ENCODE measurements at regions of chr3 and their contacts with region 1.

Region 1: GRCh38 chr3:50427984-50428633 is 68.8 kb upstream of the TMEM115 start:
- DNase-seq: peak; percentile 88
- H3K4me3 ChIP-seq: no peak overlapping the region; a peak in 1 of 4 replicates
- H3K27ac ChIP-seq: peak overlapping the region in 1 of 2 experiments; percentile 100; a peak in 2 of 4 replicates
- H3K4me1 ChIP-seq: peaks cover 0 to 92% of the 10 kb centered on the region in 2 experiments; a peak in 2 of 4 replicates
- H3K27me3 ChIP-seq: no peaks in the 10 kb centered on the region
- CTCF ChIP-seq: peak; percentile 36; the same call in 1 of the 2 replicates
- EP300 ChIP-seq: peak in 1 of 2 experiments; percentile 97; a peak in 2 of 4 replicates
- RAD21 ChIP-seq: peak; percentile 81

Region 2: DNA sequence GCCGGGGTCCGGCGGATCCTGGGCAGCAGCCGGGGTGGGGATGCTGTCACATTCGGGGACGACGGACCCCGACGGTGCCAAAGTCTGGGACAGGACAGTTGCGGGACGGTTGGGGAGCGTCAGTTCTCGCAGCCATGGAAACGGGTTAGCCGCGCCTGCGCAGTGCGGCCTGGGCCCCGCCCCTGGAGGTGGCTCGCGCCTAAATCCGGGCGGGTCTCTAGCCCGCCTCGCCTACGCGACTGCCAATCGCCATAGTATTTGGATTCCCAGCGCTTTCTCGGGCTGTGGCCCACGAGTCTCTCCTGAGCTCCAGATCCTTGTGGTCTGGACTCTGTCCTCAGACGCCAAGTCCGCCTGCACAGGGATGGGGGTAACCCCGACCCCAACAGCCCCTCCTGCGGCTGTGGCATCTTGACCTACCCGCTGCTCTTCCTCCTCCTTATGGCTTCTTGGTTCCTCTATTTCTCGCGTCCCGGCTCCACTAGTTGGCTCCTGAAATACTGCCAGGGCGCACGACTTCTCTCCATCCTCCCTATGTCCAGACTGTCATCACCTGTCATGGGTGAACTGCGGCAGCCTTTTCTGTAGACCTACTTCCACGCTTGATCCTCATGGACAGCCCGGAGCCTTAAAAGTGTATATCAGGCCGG is 82.4 kb before region 1 on chr3 and contains the start of gene ZMYND10:
- CTCF ChIA-PET with region 1: interaction called, 45 read pairs
- POLR2A ChIA-PET with region 1: interaction called, 13 read pairs
- DNase-seq: no peak
- H3K4me3 ChIP-seq: no peak within 1 kb of the TSS
- H3K27ac ChIP-seq: no peak within 1 kb of the TSS
- H3K4me1 ChIP-seq: peaks cover 3 to 32% of the 10 kb centered on the region in 2 experiments; a peak in 1 of 4 replicates
- H3K27me3 ChIP-seq: no peaks in the 10 kb centered on the region
- CTCF ChIP-seq: no peak
- EP300 ChIP-seq: no peak
- RAD21 ChIP-seq: no peak
- polyA plus RNA-seq, gene ZMYND10: 0.83 and 0.95 TPM in 2 replicates

Region 3: GRCh38 chr3:50370594-50370993 is 57.5 kb before region 1 on chr3:
- CTCF ChIA-PET with region 1: interaction called, 48 read pairs
- POLR2A ChIA-PET with region 1: no interaction called
- DNase-seq: peak; percentile 78
- H3K4me3 ChIP-seq: no peak overlapping the region
- H3K27ac ChIP-seq: peak overlapping the region in 1 of 2 experiments; percentile 56; a peak in 2 of 4 replicates
- H3K4me1 ChIP-seq: peaks cover 0 to 78% of the 10 kb centered on the region in 2 experiments; a peak in 2 of 4 replicates
- H3K27me3 ChIP-seq: no peaks in the 10 kb centered on the region
- CTCF ChIP-seq: peak; percentile 31
- EP300 ChIP-seq: no peak
- RAD21 ChIP-seq: peak; percentile 72

Region 4: DNA sequence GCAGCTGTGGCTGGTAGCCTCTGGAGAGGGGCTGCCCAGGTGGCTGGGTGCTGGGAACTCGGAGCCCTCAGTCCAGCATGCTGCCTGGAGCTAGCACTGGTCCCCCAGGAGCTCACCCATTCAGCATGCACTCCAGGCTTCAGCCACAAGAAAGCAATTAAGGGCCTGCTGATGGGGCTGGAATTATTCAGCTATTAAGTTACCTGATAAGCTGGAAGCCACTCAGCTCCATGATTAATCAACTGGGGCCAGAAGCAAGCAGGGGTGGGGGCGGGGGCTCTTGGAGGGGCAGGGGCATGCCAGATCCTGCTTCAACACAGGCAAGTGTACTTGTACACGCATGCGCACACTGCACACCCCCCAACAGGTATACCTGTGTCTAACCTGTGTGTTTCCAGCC is 46.7 kb before region 1 on chr3:
- CTCF ChIA-PET with region 1: interaction called, 128 read pairs
- POLR2A ChIA-PET with region 1: interaction called, 19 read pairs
- DNase-seq: peak; percentile 90
- H3K4me3 ChIP-seq: peak overlapping the region in 1 of 2 experiments; percentile 41; a peak in 1 of 4 replicates
- H3K27ac ChIP-seq: peak overlapping the region in 1 of 2 experiments; percentile 100; a peak in 2 of 4 replicates
- H3K4me1 ChIP-seq: peaks cover 0 to 98% of the 10 kb centered on the region in 2 experiments; a peak in 2 of 4 replicates
- H3K27me3 ChIP-seq: no peaks in the 10 kb centered on the region
- CTCF ChIP-seq: no peak
- EP300 ChIP-seq: peak in 1 of 2 experiments; percentile 97; a peak in 2 of 4 replicates
- RAD21 ChIP-seq: no peak; the same call in 1 of the 2 replicates

Region 5: DNA sequence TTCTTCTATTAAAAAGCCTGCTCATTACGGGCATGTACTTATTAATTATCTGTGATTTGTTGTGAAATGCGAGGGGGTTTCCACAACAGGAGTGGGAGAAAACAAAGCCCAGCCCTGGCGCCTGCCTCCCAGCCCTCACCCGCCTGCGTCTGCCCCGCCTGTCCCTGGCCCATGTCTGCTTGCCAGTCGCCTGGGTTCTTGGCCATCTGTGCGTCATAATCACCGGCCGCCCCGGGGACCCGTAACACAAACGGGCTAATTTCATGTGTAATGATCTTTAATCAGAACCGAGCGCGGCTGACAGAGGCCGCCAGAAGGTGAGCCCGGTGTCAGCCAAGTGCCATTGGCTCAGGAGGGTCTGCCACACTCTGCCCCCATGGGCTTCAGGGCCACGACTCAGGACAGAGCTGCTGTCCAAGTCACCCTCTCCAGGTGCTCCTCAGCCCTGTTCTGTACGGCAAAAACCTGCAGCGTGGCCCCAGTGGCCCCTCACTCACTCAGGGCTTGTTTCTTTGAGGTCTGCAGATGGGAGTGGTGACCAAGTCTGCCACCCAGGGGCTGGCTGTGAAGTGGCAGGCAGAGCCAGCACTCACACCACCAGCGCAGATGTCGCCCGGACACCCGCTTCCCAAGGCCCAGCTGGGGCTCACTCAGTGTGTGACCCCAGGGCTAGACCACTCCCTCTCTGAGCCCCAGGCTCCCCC is 39.9 kb before region 1 on chr3:
- CTCF ChIA-PET with region 1: interaction called, 128 read pairs
- POLR2A ChIA-PET with region 1: interaction called, 14 read pairs
- DNase-seq: peak; percentile 89
- H3K4me3 ChIP-seq: no peak overlapping the region
- H3K27ac ChIP-seq: peak overlapping the region in 1 of 2 experiments; percentile 100; a peak in 2 of 4 replicates
- H3K4me1 ChIP-seq: peaks cover 0 to 99% of the 10 kb centered on the region in 2 experiments; a peak in 2 of 4 replicates
- H3K27me3 ChIP-seq: no peaks in the 10 kb centered on the region
- CTCF ChIP-seq: peak; percentile 46
- EP300 ChIP-seq: peak in 1 of 2 experiments; percentile 86; a peak in 1 of 4 replicates
- RAD21 ChIP-seq: peak; percentile 73

Region 6: DNA sequence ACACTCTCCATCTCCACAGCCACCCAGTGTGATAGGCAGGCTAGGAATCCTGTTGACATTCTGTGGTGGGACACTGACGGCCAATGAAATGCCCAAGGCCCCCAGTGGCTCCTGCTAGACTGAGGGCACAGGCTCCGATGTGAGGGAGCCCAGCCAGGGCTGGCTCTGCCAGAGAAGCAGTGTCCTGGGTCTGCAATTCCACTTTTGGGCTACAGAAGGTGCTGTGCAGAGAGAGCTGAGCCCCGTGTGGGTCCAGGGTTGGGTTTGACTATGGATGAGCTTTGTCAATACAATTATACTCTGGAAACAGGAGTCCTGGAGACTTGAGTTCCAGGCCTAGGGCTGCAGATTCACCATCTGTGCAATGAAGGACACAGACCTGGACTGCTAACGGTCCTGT is 13.0 kb before region 1 on chr3:
- CTCF ChIA-PET with region 1: interaction called, 43 read pairs
- POLR2A ChIA-PET with region 1: interaction called, 3 read pairs
- DNase-seq: no peak
- H3K4me3 ChIP-seq: no peak overlapping the region
- H3K27ac ChIP-seq: peak overlapping the region in 1 of 2 experiments; percentile 45; a peak in 1 of 4 replicates
- H3K4me1 ChIP-seq: peaks cover 0 to 74% of the 10 kb centered on the region in 2 experiments; a peak in 1 of 4 replicates
- H3K27me3 ChIP-seq: no peaks in the 10 kb centered on the region
- CTCF ChIP-seq: no peak
- EP300 ChIP-seq: no peak
- RAD21 ChIP-seq: no peak